CD8-positive, alpha-beta memory T cell (primary cell): ENCODE measurements at regions of chr1 and their contacts with region 1.

Region 1: DNA sequence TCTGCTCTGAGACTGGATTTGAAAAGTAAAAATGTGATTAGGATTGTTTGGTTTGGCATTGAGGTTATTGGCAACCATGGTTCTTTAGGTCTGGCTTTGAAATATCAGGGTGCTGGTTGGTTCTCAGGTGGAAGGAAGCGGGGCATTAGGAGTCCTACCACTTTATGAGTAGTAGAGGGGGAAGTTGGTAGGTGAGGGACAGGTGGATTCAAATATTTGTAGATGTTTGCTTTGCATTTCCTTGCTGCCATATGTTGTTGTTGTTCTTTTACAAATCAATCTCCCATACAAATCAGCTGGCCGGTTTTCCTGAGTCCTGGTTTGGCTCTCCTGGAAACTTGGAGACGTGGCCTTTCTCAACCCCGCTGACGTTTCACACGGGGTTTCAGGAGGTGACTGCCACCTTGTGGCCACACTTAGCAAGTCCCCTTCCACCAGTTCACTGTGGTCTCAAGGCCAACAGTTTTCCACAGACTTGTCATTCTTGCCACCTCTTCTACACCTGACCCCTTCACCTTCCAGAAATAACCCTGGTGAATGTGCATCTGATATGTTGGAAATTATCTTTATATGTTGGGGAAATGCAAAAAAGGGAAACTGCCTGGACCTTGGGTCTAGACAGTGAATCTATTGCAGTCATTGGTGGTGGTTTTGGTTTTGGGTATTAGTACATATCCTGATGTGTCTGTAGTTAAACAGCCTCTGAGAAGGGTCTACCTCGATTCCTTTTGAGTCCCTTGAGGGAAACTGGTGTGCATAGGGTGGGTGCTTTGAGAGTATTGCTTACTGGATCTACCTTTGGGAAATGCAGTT is 127.0 kb upstream of the KIAA0040 start:
- DNase-seq: peak; percentile 49 to 75 (median 58)
- H3K4me3 ChIP-seq: no peak overlapping the region
- H3K4me3 Mint-ChIP-seq: peak overlapping the region in 2 of 7 donors; percentile 12 to 49
- H3K27ac ChIP-seq: no peak overlapping the region
- H3K27ac Mint-ChIP-seq: peak overlapping the region in 2 of 8 donors; percentile 34 to 35
- H3K4me1 ChIP-seq: peaks cover 7% of the 10 kb centered on the region
- H3K4me1 Mint-ChIP-seq: peaks cover 4 to 10% (median 6%) of the 10 kb centered on the region in 3 donors
- H3K27me3 ChIP-seq: no peaks in the 10 kb centered on the region
- H3K27me3 Mint-ChIP-seq: peaks cover 7% of the 10 kb centered on the region in 2 donors

Region 2: GRCh38 chr1:175146529-175147213 is 173.0 kb before region 1 on chr1:
- CTCF ChIA-PET with region 1: interaction called, 149 read pairs
- POLR2A ChIA-PET with region 1: no interaction called
- DNase-seq: peak; percentile 31 to 73 (median 52)
- H3K4me3 ChIP-seq: no peak overlapping the region
- H3K4me3 Mint-ChIP-seq: no peak overlapping the region
- H3K27ac ChIP-seq: no peak overlapping the region
- H3K27ac Mint-ChIP-seq: no peak overlapping the region
- H3K4me1 ChIP-seq: no peaks in the 10 kb centered on the region
- H3K4me1 Mint-ChIP-seq: peaks cover 2 to 9% (median 6%) of the 10 kb centered on the region in 3 donors
- H3K27me3 ChIP-seq: peaks cover 2% of the 10 kb centered on the region
- H3K27me3 Mint-ChIP-seq: peaks cover 30 to 32% of the 10 kb centered on the region in 2 donors

Region 3: DNA sequence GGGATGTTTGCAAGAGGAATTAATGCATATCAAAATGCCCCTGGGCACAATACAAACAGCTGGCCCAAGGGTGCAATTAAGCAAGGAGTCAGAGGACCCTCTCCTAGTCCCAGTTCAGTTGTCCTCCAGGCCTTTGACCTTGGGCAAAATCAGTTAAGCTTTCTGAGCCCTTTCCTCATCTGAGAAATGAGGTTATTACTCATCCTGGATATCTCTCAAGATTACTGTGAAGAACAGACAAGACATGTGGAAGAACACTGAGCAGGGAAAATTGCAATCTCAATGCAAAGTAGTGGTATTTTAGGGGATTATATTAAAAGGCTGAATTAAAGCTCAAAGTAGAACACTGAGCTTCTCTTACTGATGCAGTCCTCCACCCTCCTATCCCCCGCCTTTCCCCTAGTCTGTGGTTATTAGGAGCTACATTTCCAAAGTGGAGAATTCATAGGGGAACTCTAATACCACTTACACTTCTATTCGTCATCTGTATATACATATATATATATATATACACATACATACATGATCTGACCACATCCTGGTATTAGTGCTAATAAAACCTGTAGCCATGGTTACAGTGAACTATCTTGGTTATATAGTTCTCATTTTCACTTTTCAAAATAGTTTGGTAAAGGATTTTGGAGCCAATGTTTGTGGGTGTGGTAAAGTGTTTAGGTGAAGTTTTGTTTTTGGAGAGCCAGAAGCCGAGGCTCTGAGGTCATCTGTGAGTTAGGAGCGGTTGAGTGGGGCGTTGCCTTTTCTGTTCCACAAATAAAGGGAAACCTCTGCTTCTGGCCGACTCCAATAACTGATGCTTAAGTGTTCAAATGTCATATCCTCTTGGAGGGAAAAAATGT is 145.1 kb before region 1 on chr1:
- CTCF ChIA-PET with region 1: interaction called, 19 read pairs
- POLR2A ChIA-PET with region 1: no interaction called
- DNase-seq: peak in 1 of 5 donors; percentile 31
- H3K4me3 ChIP-seq: no peak overlapping the region
- H3K4me3 Mint-ChIP-seq: peak overlapping the region in 5 of 7 donors; percentile 9 to 54 (median 30)
- H3K27ac ChIP-seq: no peak overlapping the region
- H3K27ac Mint-ChIP-seq: peak overlapping the region in 7 of 8 donors; percentile 48 to 85 (median 66)
- H3K4me1 ChIP-seq: peaks cover 19% of the 10 kb centered on the region
- H3K4me1 Mint-ChIP-seq: peaks cover 65 to 92% (median 87%) of the 10 kb centered on the region in 3 donors
- H3K27me3 ChIP-seq: no peaks in the 10 kb centered on the region
- H3K27me3 Mint-ChIP-seq: no peaks in the 10 kb centered on the region

Region 4: DNA sequence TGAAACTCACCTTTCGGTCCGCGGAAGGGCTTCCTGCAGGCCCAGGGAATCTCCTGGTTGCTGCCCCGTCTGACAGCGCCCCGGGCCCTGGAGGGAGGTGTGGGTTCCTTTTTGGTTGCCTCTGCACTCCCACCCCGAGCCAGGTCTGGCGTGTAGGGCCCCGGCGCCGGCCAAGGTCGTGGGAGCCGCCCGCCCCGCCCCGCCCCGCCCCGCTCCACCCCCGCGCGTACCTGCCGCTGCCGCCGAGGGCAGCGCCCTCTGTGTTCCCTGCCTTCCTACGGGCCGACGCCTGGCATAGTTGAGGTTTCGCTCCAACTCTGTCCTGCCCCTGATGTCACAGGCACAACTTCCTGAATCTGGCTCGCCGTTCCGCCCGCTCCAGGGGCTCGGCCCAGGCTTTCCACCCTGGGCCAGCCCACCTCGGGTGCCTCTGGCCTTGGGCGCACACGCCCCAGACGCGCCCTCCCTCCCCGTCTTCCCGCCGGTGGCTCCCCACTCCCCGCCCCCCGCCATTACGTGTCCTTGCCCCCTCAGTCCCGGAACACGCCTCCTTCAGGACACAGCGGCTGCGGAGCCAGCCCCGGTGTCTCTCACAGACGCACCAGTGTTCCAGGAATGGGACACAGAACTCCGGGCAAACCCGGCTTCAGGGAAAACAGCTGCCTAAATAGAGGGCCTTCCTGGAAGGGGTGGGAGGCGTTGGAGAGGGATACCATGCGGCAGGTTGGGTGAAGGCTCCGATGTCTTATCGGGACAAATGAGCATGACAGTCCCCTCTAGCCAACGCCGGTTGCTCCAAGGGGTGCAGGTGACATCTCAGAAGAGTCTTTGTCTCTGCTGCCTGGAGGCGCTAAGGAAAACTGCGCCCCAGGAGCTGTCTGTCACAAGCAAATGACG is 126.7 kb before region 1 on chr1 and contains the start of gene KIAA0040:
- CTCF ChIA-PET with region 1: interaction called, 23 read pairs
- POLR2A ChIA-PET with region 1: no interaction called
- DNase-seq: peak; percentile 50 to 68 (median 53)
- H3K4me3 ChIP-seq: peak within 1 kb of the TSS; percentile 95
- H3K4me3 Mint-ChIP-seq: peak within 1 kb of the TSS; percentile 94 to 99 (median 98)
- H3K27ac ChIP-seq: peak within 1 kb of the TSS; percentile 80
- H3K27ac Mint-ChIP-seq: peak within 1 kb of the TSS; percentile 71 to 99 (median 94)
- H3K4me1 ChIP-seq: peaks cover 39% of the 10 kb centered on the region
- H3K4me1 Mint-ChIP-seq: peaks cover 47 to 53% (median 50%) of the 10 kb centered on the region in 3 donors
- H3K27me3 ChIP-seq: no peaks in the 10 kb centered on the region
- H3K27me3 Mint-ChIP-seq: no peaks in the 10 kb centered on the region
- total RNA-seq, gene KIAA0040: 30.4 to 31.8 TPM

Region 5: DNA sequence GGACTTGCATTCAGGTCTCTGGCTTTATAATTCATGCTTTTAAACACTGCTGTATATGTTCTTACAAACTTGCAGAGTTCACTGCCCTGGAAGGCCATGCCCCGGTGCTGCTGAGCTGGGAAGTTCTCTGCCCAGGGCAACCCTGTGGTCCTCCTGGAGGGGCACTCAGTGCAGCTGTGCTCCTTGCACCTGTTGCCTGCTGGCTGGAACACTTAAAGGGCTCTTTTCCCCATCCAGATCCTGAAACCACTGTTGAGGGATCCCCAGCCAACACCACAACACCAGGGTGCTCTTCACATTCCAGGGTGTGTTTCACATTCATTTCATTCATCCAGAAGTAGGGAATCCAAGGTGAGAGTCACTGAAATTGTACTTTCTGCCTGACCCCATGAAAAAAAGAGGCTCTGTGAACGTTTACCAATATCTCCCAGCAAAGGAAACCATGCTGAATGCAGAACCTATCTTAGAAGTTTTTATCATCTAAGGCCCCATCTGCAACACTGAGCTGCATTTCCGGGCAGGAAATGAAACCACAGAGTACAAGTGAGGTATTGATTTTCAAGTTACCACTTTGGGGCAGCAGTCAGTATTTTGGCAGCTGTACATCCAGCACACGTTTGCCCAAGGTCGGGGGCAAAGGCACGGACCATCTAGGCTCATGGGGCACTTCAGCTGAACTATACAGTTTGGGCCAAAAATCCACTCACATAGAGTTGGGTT is 110.7 kb before region 1 on chr1:
- CTCF ChIA-PET with region 1: interaction called, 10 read pairs
- POLR2A ChIA-PET with region 1: no interaction called
- DNase-seq: peak; percentile 11 to 80 (median 74)
- H3K4me3 ChIP-seq: peak overlapping the region; percentile 44
- H3K4me3 Mint-ChIP-seq: peak overlapping the region; percentile 72 to 92 (median 87)
- H3K27ac ChIP-seq: peak overlapping the region; percentile 43
- H3K27ac Mint-ChIP-seq: peak overlapping the region; percentile 80 to 97 (median 94)
- H3K4me1 ChIP-seq: peaks cover 61% of the 10 kb centered on the region
- H3K4me1 Mint-ChIP-seq: peaks cover 62 to 85% (median 76%) of the 10 kb centered on the region in 3 donors
- H3K27me3 ChIP-seq: no peaks in the 10 kb centered on the region
- H3K27me3 Mint-ChIP-seq: no peaks in the 10 kb centered on the region

Region 6: DNA sequence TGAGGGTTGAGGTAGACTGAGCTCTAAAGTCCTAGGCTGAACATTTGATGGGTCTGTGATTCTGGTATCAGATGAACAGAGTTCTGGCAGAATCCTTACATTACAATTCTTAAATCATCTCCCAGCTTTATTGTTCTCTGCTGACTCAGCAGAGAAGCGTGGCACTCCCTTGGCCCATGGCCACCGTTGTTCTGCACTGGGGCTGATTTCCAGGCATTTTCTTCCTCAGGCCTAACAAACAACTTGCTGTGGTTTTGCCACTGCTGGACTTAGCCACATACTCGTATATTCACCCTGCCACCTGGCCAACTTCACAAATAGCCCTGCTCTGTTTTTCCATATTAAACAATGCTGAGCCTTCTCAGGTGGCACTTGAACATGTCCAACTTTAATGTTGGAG is 200.6 kb after region 1 on chr1:
- CTCF ChIA-PET with region 1: no interaction called
- POLR2A ChIA-PET with region 1: no interaction called
- DNase-seq: no peak
- H3K4me3 ChIP-seq: no peak overlapping the region
- H3K4me3 Mint-ChIP-seq: no peak overlapping the region
- H3K27ac ChIP-seq: no peak overlapping the region
- H3K27ac Mint-ChIP-seq: no peak overlapping the region
- H3K4me1 ChIP-seq: no peaks in the 10 kb centered on the region
- H3K4me1 Mint-ChIP-seq: peaks cover 0 to under 1% (median under 1%) of the 10 kb centered on the region in 3 donors
- H3K27me3 ChIP-seq: no peaks in the 10 kb centered on the region
- H3K27me3 Mint-ChIP-seq: peaks cover 10 to 26% of the 10 kb centered on the region in 2 donors

Region 7: GRCh38 chr1:175792136-175792535 is 472.5 kb after region 1 on chr1:
- CTCF ChIA-PET with region 1: no interaction called
- POLR2A ChIA-PET with region 1: no interaction called
- DNase-seq: no peak
- H3K4me3 ChIP-seq: no peak overlapping the region
- H3K4me3 Mint-ChIP-seq: no peak overlapping the region
- H3K27ac ChIP-seq: no peak overlapping the region
- H3K27ac Mint-ChIP-seq: no peak overlapping the region
- H3K4me1 ChIP-seq: no peaks in the 10 kb centered on the region
- H3K4me1 Mint-ChIP-seq: no peaks in the 10 kb centered on the region
- H3K27me3 ChIP-seq: no peaks in the 10 kb centered on the region
- H3K27me3 Mint-ChIP-seq: peaks cover 3 to 38% of the 10 kb centered on the region in 2 donors